ENCODE measurements at regions of chr2 and their contacts with region 1.

Region 1: DNA sequence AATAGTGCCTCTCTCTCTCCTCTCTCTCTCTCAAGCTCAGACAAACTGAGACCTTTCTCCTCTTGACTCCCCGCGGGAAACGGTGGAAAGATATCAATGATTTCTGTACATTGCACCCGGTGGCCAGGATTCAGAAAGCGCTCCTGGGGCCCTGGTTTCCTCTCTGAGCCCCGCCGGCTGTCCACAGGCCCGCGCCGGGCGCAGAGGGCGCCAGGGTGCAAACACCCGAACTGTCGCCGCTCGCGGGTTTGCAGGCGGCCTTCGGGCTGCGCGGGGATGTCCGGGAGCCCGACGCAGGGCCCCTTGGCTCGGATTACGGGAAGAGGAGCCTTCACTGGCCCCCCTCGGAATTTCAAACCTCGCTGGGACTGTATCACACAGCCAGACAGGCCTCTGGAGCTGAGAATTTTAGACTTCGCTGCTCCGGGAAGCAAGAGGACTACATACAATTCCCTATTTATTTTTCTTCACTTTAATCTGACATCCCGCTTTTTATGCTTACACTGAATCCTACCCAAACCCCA is 5.2 kb upstream of the EN1 start:
- DNase-seq: peak in 2 of 5 donors; percentile 43 to 46
- H3K4me3 ChIP-seq: no peak overlapping the region
- H3K27ac ChIP-seq: no peak overlapping the region
- H3K4me1 ChIP-seq: peaks cover 0 to 12% (median 0%) of the 10 kb centered on the region in 3 donors
- H3K27me3 ChIP-seq: peaks cover 75% of the 10 kb centered on the region
- CTCF ChIP-seq: no peak

Region 2: GRCh38 chr2:118224895-118225311 is 627.8 kb before region 1 on chr2:
- intact Hi-C with region 1: loop called (anchors 5 kb)
- DNase-seq: peak in 1 of 5 donors; percentile 14
- H3K4me3 ChIP-seq: no peak overlapping the region
- H3K27ac ChIP-seq: no peak overlapping the region
- H3K4me1 ChIP-seq: peaks cover 0 to 5% (median 0%) of the 10 kb centered on the region in 3 donors
- H3K27me3 ChIP-seq: peaks cover 32% of the 10 kb centered on the region
- CTCF ChIP-seq: no peak

Measured in kidney (tissue), 22 donors.